A673 (cell line): ENCODE measurements at regions of chr21 and their contacts with region 1.

Region 1: GRCh38 chr21:39332175-39332574 is 16.7 kb downstream of the HMGN1 start:
- DNase-seq: no peak
- H3K4me3 ChIP-seq: no peak overlapping the region
- H3K27ac ChIP-seq: no peak overlapping the region
- H3K4me1 ChIP-seq: no peaks in the 10 kb centered on the region
- H3K27me3 ChIP-seq: no peaks in the 10 kb centered on the region
- CTCF ChIP-seq: no peak

Region 2: GRCh38 chr21:39422527-39423241 is 90.5 kb after region 1 on chr21:
- CTCF ChIA-PET with region 1: interaction called, 13 read pairs
- POLR2A ChIA-PET with region 1: no interaction called
- intact Hi-C with region 1: no loop called
- DNase-seq: no peak
- H3K4me3 ChIP-seq: no peak overlapping the region
- H3K27ac ChIP-seq: no peak overlapping the region
- H3K4me1 ChIP-seq: no peaks in the 10 kb centered on the region
- H3K27me3 ChIP-seq: no peaks in the 10 kb centered on the region
- CTCF ChIP-seq: no peak